ENCODE measurements at regions of chr2 and their contacts with region 1.

Region 1: GRCh38 chr2:106104332-106105062 is 89.6 kb downstream of the UXS1 start:
- DNase-seq: peak; percentile 60 to 63
- H3K4me3 ChIP-seq: no peak overlapping the region
- H3K27ac ChIP-seq: no peak overlapping the region
- H3K4me1 ChIP-seq: no peaks in the 10 kb centered on the region
- H3K27me3 ChIP-seq: no peaks in the 10 kb centered on the region
- CTCF ChIP-seq: peak; percentile 86 to 94 (median 91)
- POLR2A ChIP-seq: no peak

Region 2: GRCh38 chr2:106269591-106270291 is 165.2 kb after region 1 on chr2:
- intact Hi-C with region 1: loop called (anchors 10 kb)
- DNase-seq: peak; percentile 97 to 98
- H3K4me3 ChIP-seq: peak overlapping the region in 1 of 3 donors; percentile 29
- H3K27ac ChIP-seq: peak overlapping the region; percentile 18 to 61 (median 55)
- H3K4me1 ChIP-seq: peaks cover 6 to 7% of the 10 kb centered on the region in 2 donors
- H3K27me3 ChIP-seq: no peaks in the 10 kb centered on the region
- CTCF ChIP-seq: no peak
- POLR2A ChIP-seq: no peak

Region 3: DNA sequence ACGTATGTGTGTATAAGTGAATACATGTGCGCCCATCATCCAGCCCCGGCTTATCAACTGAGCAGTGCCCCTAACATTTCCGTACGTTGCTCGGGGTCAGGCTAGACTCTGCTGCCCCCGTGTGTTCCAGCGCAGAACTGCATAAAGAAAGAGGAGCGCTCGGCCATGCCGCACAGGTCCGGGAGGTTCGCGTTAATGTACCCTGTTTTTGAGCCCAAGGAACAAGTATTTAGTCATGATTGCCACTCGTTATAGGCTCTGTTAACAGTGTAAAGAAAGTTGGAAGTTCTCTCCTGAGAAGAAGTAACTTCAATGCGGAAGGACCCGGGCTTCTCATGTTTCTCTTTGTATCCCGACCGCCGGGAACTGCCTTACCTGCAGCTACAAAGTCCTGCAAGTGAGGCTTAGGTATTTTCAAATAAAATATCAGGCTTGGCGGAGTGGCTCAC is 438.3 kb after region 1 on chr2:
- intact Hi-C with region 1: loop called (anchors 10 kb)
- DNase-seq: peak; percentile 65 to 72
- H3K4me3 ChIP-seq: no peak overlapping the region
- H3K27ac ChIP-seq: peak overlapping the region in 1 of 3 donors; percentile 17
- H3K4me1 ChIP-seq: peaks cover 1 to 4% of the 10 kb centered on the region in 2 donors
- H3K27me3 ChIP-seq: no peaks in the 10 kb centered on the region
- CTCF ChIP-seq: peak; percentile 80 to 93 (median 85)
- POLR2A ChIP-seq: no peak

Region 4: DNA sequence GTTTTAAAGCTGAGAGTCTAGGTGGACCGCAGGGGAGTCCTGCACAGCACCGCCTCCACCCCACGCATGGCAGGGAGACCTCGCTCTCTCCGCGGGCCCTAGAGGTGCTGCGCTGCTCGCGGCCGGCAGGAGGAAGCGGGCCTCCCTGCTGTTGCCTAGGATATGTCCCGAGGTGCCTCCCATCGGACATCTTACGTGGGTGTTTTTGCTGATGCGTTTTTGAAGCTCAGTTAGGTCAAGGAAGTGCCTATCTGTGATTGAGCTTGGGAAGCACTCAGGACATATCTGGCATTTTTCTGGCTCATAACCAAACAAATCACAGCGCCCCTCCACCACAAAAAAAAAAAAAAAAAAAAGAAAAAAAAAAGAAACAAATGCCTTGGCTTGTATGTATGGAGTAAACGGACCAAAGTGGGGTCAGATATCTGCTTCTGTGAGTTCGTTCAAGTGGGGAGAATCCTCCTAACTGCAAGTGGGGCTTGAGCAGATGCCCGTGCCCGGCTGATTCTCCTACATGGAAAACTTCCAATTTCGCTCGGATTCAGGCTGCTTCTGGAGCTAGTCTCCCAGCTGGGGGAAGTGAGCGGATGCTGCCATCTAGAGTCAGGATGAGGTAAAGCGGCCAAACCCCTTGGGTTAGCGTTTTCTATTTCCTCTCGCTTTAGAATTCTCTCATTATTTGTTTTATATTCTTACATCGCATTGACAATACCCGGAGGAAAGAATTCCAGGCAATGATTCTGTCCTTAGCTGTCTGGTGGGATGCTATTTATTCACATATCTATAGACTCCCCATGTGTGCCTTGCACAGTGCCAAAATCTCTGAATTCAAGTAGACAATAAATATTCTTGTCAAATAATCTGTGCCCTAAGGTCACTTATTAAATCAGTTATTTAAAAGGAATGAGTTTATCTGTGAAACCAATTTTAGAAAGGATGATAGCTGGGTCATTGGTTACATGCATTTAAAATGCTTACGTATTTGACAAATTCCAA is 477.9 kb after region 1 on chr2:
- intact Hi-C with region 1: loop called (anchors 10 kb)
- DNase-seq: peak; percentile 74 to 78
- H3K4me3 ChIP-seq: no peak overlapping the region
- H3K27ac ChIP-seq: no peak overlapping the region
- H3K4me1 ChIP-seq: peaks cover 0 to 5% of the 10 kb centered on the region in 2 donors
- H3K27me3 ChIP-seq: no peaks in the 10 kb centered on the region
- CTCF ChIP-seq: peak; percentile 43 to 92 (median 80)
- POLR2A ChIP-seq: no peak